Endothelial cell of umbilical vein (primary cell): ENCODE measurements at regions of chr1 and their contacts with region 1.

Region 1: DNA sequence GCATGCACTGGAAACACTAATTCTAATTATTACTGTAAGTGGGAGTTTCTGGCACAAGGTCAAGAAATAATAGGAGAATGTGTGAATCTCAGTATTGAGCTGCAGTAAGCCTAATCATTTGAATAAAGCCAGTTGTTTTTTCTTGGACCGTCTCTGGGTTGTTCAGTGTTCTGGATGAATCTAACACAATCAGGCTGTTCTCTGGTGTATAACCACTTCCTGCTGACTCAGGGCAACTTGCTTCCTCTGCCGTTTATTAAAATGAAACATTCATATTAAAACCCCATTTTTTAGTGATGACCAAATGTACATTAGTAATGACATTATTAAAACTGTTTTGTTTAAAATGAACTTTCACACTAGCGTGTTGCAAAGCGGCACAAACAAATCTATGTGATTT is 273.1 kb upstream of the SNX7 start:
- DNase-seq: peak; percentile 91
- H3K4me3 ChIP-seq: peak overlapping the region in 1 of 3 experiments; percentile 27
- H3K27ac ChIP-seq: peak overlapping the region; percentile 80
- H3K4me1 ChIP-seq: peaks cover 57% of the 10 kb centered on the region
- H3K27me3 ChIP-seq: no peaks in the 10 kb centered on the region
- CTCF ChIP-seq: no peak
- POLR2A ChIP-seq: peak; percentile 18

Region 2: DNA sequence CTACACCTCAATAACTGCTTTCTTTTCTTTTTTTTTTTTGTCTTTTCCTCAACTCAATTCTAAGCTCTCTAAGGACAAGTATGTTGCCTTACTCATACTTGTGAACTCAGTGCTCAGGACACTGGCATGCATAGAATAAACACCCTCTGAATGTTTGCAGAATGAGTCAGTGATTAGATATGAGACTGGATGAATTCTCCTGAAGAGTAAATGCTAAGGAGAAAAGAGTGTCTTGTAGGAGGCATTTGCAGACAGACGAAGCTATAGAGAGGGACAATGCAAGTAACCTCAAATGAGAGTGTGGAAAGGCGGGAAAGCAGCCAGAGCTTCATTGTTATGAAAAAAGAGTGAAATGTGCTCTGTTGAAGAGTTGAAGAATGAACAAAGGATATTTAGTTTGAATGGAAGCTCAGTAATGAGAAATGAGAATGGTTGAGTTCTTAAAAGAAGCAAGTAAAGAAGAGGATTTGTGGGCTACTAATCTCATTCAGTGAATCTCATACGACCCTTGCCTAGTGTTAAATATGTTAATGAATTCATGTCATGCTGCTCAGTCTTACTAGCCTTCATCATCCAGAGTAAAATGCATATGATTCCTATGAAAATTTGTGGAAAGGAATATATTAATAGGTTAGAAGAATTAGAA is 301.5 kb before region 1 on chr1:
- CTCF ChIA-PET with region 1: no interaction called
- POLR2A ChIA-PET with region 1: no interaction called
- dilution Hi-C with region 1: no loop called
- intact Hi-C with region 1: loop called (anchors 1 kb)
- DNase-seq: peak; percentile 95
- H3K4me3 ChIP-seq: peak overlapping the region in 1 of 3 experiments; percentile 90
- H3K27ac ChIP-seq: peak overlapping the region; percentile 71
- H3K4me1 ChIP-seq: peaks cover 46% of the 10 kb centered on the region
- H3K27me3 ChIP-seq: no peaks in the 10 kb centered on the region
- CTCF ChIP-seq: no peak
- POLR2A ChIP-seq: no peak